H1 (cell line): ENCODE measurements at regions of chr16 and their contacts with region 1.

Region 1: GRCh38 chr16:84484579-84485254 is 19.7 kb downstream of the MEAK7 start:
- DNase-seq: peak in 1 of 2 experiments; percentile 73
- H3K4me3 ChIP-seq: no peak overlapping the region
- H3K27ac ChIP-seq: no peak overlapping the region
- H3K4me1 ChIP-seq: no peaks in the 10 kb centered on the region
- H3K27me3 ChIP-seq: no peaks in the 10 kb centered on the region
- CTCF ChIP-seq: peak; percentile 88 to 89 (median 88)
- EP300 ChIP-seq: no peak
- POLR2A ChIP-seq: no peak
- RAD21 ChIP-seq: peak; percentile 99

Region 2: GRCh38 chr16:84266451-84266850 is 218.3 kb before region 1 on chr16:
- CTCF ChIA-PET with region 1: interaction called, 13 read pairs
- POLR2A ChIA-PET with region 1: no interaction called
- DNase-seq: peak in 1 of 2 experiments; percentile 68
- H3K4me3 ChIP-seq: no peak overlapping the region
- H3K27ac ChIP-seq: no peak overlapping the region
- H3K4me1 ChIP-seq: peaks cover 0 to 2% (median 0%) of the 10 kb centered on the region in 4 experiments; a peak in 2 of 7 replicates
- H3K27me3 ChIP-seq: peaks cover 0 to 3% (median 0%) of the 10 kb centered on the region in 4 experiments; a peak in 1 of 7 replicates
- CTCF ChIP-seq: no peak
- EP300 ChIP-seq: no peak
- POLR2A ChIP-seq: no peak
- RAD21 ChIP-seq: no peak

Region 3: DNA sequence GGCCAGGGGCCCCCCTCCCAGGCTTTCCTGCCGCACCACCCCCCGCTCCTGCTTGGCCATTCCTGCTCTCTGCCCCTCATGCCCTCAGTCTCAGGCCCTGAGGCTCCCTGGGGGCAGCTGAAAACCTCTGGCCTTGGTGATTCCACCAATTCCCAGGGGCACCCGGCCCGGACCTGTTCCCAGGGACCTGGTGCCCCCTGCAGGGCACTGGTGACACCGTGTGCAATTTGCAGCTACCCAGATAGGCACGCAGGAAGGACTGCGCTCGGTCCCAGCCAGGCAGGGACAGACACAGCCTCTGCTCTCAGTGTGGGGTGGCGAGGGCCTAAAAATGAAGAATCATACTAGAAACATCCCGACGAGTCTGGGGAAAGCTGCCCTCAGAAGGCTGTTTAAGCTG is 176.6 kb before region 1 on chr16:
- CTCF ChIA-PET with region 1: interaction called, 26 read pairs
- POLR2A ChIA-PET with region 1: no interaction called
- DNase-seq: peak in 1 of 2 experiments; percentile 86
- H3K4me3 ChIP-seq: no peak overlapping the region
- H3K27ac ChIP-seq: no peak overlapping the region
- H3K4me1 ChIP-seq: peaks cover 0 to 3% (median 0%) of the 10 kb centered on the region in 4 experiments; a peak in 2 of 7 replicates
- H3K27me3 ChIP-seq: no peaks in the 10 kb centered on the region
- CTCF ChIP-seq: peak; percentile 83 to 92 (median 85)
- EP300 ChIP-seq: no peak
- POLR2A ChIP-seq: no peak
- RAD21 ChIP-seq: peak; percentile 91 to 98

Region 4: GRCh38 chr16:84443166-84443802 is 41.4 kb before region 1 on chr16:
- CTCF ChIA-PET with region 1: interaction called, 14 read pairs
- POLR2A ChIA-PET with region 1: no interaction called
- DNase-seq: no peak
- H3K4me3 ChIP-seq: no peak overlapping the region
- H3K27ac ChIP-seq: no peak overlapping the region
- H3K4me1 ChIP-seq: no peaks in the 10 kb centered on the region
- H3K27me3 ChIP-seq: no peaks in the 10 kb centered on the region
- CTCF ChIP-seq: no peak
- EP300 ChIP-seq: no peak
- POLR2A ChIP-seq: no peak
- RAD21 ChIP-seq: no peak

Region 5: GRCh38 chr16:84471316-84471715 is 13.4 kb before region 1 on chr16:
- CTCF ChIA-PET with region 1: interaction called, 15 read pairs
- POLR2A ChIA-PET with region 1: interaction called, 3 read pairs
- DNase-seq: no peak
- H3K4me3 ChIP-seq: no peak overlapping the region
- H3K27ac ChIP-seq: no peak overlapping the region
- H3K4me1 ChIP-seq: no peaks in the 10 kb centered on the region
- H3K27me3 ChIP-seq: no peaks in the 10 kb centered on the region
- CTCF ChIP-seq: no peak
- EP300 ChIP-seq: no peak
- POLR2A ChIP-seq: no peak
- RAD21 ChIP-seq: no peak

Region 6: DNA sequence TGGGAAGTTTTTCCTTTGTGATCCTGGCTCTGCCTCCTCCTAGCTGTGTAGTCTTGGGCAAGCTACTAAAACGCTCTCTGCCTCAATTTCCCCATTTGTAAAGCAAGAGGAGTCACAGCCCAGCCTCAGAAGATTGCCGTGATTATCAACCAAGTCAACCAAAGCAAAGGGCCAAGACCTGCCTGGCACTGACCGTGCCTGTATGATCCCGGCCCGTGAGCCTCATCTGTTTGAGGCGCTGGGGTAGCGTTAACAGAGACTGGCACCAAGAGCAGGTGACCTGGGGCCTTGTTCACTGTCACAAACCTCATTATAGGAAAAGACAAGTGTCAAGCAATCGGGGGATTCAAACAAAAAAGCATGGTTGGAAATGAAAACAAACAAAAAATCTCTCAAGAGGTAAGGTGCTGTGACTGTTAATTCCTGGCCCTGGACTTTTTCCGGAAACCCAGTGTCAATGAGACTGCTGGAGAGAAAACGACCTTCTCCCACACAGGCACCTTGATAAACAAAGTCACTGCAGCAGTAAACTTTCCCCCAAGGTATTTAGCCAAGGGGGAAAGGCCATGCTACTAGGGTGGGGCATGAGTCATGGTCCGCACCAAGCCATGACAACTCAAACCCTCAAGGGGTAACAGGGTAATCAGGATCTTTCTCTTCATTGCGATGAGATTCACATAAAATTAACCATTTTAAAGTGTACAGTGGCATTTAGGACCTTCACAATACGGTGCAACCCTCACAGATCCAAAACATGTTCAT is 14.3 kb after region 1 on chr16:
- CTCF ChIA-PET with region 1: interaction called, 14 read pairs
- POLR2A ChIA-PET with region 1: no interaction called
- DNase-seq: no peak
- H3K4me3 ChIP-seq: no peak overlapping the region
- H3K27ac ChIP-seq: no peak overlapping the region
- H3K4me1 ChIP-seq: peaks cover 0 to 5% (median 4%) of the 10 kb centered on the region in 4 experiments; a peak in 5 of 7 replicates
- H3K27me3 ChIP-seq: no peaks in the 10 kb centered on the region
- CTCF ChIP-seq: no peak
- EP300 ChIP-seq: no peak
- POLR2A ChIP-seq: no peak
- RAD21 ChIP-seq: no peak